B cell (primary cell): ENCODE measurements at regions of chr4 and their contacts with region 1.

Region 1: DNA sequence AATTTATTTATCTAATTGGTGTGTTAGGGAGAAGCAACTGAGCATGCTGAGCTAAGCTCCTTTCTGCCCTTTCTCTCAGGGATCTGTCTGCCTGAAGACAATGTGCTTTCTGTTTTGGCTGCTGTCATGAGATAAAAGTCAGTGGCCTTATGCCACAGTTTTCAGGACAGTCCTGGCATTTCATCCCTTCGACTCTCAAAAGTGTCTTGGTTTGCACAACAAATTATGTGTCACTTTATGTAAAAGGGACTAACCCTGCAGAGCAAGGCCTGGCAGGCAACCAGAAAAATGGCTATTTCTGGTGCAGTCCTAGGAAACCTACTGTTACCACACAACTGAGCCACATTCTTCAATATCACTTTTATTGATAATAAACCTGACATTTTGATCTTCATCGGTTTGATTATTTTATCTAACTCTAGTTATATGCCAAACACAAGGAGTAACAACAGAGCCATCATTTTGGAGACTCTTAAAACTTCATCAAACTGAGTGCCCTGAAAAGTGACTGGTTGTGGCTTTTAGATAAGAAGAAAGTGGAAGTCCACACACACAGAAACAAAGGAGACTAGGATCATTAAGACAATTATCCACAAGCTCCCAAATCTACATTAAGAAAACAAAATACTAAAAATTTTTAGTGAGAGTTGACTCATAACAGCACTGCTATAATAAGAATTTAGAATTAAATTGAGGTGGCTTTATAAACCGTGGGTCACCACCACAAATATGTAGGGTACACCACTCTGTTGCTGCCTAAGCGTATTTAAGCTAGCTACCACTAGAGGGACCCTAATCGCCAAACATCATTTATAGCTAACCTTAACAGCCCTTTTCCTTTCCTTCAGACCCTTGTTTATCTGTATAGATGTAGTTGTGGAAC is 95.9 kb upstream of the PTPN13 start:
- DNase-seq: peak; percentile 44
- ATAC-seq: peak; percentile 67
- H3K4me3 ChIP-seq: no peak overlapping the region
- H3K4me3 Mint-ChIP-seq: no peak overlapping the region
- H3K27ac ChIP-seq: no peak overlapping the region
- H3K27ac Mint-ChIP-seq: no peak overlapping the region
- H3K4me1 ChIP-seq: no peaks in the 10 kb centered on the region
- H3K4me1 Mint-ChIP-seq: no peaks in the 10 kb centered on the region
- H3K27me3 ChIP-seq: no peaks in the 10 kb centered on the region
- H3K27me3 Mint-ChIP-seq: peaks cover 17% of the 10 kb centered on the region
- CTCF ChIP-seq: peak; percentile 86

Region 2: GRCh38 chr4:86487738-86488348 is 10.4 kb before region 1 on chr4:
- CTCF ChIA-PET with region 1: interaction called, 39 read pairs
- POLR2A ChIA-PET with region 1: no interaction called
- intact Hi-C with region 1: no loop called
- DNase-seq: no peak
- ATAC-seq: no peak
- H3K4me3 ChIP-seq: no peak overlapping the region
- H3K4me3 Mint-ChIP-seq: no peak overlapping the region
- H3K27ac ChIP-seq: no peak overlapping the region
- H3K27ac Mint-ChIP-seq: no peak overlapping the region
- H3K4me1 ChIP-seq: no peaks in the 10 kb centered on the region
- H3K4me1 Mint-ChIP-seq: peaks cover 2% of the 10 kb centered on the region
- H3K27me3 ChIP-seq: no peaks in the 10 kb centered on the region
- H3K27me3 Mint-ChIP-seq: no peaks in the 10 kb centered on the region
- CTCF ChIP-seq: no peak

Region 3: GRCh38 chr4:86512631-86513030 is 14.4 kb after region 1 on chr4:
- CTCF ChIA-PET with region 1: interaction called, 26 read pairs
- POLR2A ChIA-PET with region 1: no interaction called
- intact Hi-C with region 1: no loop called
- DNase-seq: no peak
- ATAC-seq: no peak
- H3K4me3 ChIP-seq: no peak overlapping the region
- H3K4me3 Mint-ChIP-seq: no peak overlapping the region
- H3K27ac ChIP-seq: no peak overlapping the region
- H3K27ac Mint-ChIP-seq: no peak overlapping the region
- H3K4me1 ChIP-seq: no peaks in the 10 kb centered on the region
- H3K4me1 Mint-ChIP-seq: no peaks in the 10 kb centered on the region
- H3K27me3 ChIP-seq: no peaks in the 10 kb centered on the region
- H3K27me3 Mint-ChIP-seq: peaks cover 5% of the 10 kb centered on the region
- CTCF ChIP-seq: no peak

Region 4: DNA sequence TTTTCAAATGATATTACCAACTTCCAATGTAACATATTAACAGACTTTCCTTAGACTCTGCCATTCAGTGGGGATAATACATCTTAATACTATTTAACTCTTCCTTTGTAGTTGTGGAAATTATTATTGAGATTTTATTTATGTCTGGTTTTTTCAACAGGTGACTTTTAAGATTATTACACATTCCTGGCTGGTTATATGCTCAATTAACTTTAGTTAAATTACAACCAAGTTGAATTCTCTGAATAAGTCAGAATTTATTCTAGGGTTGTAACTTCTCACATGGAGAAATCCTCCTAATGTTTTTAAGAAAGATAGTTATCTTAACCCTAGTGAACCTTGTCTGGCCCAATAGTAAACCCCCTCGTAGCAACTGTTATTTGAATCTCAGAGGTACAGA is 243.6 kb after region 1 on chr4:
- CTCF ChIA-PET with region 1: no interaction called
- POLR2A ChIA-PET with region 1: no interaction called
- intact Hi-C with region 1: no loop called
- DNase-seq: no peak
- ATAC-seq: no peak
- H3K4me3 ChIP-seq: no peak overlapping the region
- H3K4me3 Mint-ChIP-seq: no peak overlapping the region
- H3K27ac ChIP-seq: no peak overlapping the region
- H3K27ac Mint-ChIP-seq: no peak overlapping the region
- H3K4me1 ChIP-seq: no peaks in the 10 kb centered on the region
- H3K4me1 Mint-ChIP-seq: no peaks in the 10 kb centered on the region
- H3K27me3 ChIP-seq: no peaks in the 10 kb centered on the region
- H3K27me3 Mint-ChIP-seq: no peaks in the 10 kb centered on the region
- CTCF ChIP-seq: no peak

Region 5: DNA sequence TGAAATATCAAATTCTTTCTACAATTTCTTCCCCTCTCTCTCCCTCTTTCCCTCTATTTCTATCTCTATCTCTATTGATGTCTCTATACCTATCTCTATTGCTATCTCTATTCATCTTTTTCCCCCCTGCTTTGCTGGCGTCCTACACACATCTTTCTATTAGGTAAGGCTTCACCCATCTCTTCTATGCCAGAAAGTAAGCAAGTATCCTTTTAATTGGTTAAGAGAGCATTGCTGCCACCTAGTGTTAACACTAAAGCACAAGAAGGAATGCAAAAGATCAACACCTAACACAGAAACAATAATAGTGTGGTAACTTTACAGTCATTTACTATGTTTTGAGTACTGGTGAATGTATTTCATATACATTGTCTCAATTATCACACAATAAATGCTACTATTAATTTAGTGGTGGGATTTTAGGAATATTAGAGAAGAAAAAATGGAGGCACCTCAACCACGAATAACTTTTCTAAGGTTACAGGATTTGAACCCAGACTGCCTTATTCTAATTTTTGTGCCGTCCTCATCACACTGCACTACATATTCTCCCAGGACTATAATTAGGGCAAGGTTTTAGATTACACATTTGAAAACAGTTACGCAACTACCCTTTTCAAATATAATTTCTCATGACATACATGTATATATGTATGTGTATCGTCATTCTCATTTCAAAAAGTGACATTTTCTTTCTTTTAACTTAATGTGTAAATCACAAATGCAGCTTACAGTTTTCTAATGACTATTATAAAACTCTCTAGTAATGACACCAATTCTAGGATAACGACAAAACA is 397.7 kb after region 1 on chr4:
- CTCF ChIA-PET with region 1: interaction called, 23 read pairs
- POLR2A ChIA-PET with region 1: no interaction called
- intact Hi-C with region 1: loop called (anchors 1 kb)
- DNase-seq: peak; percentile 59
- ATAC-seq: peak; percentile 60
- H3K4me3 ChIP-seq: no peak overlapping the region
- H3K4me3 Mint-ChIP-seq: no peak overlapping the region
- H3K27ac ChIP-seq: no peak overlapping the region
- H3K27ac Mint-ChIP-seq: no peak overlapping the region
- H3K4me1 ChIP-seq: peaks cover 10 to 13% of the 10 kb centered on the region in 2 donors
- H3K4me1 Mint-ChIP-seq: peaks cover 9% of the 10 kb centered on the region
- H3K27me3 ChIP-seq: peaks cover 0 to 20% (median 7%) of the 10 kb centered on the region in 4 experiments
- H3K27me3 Mint-ChIP-seq: peaks cover 17% of the 10 kb centered on the region
- CTCF ChIP-seq: peak; percentile 91

Region 6: DNA sequence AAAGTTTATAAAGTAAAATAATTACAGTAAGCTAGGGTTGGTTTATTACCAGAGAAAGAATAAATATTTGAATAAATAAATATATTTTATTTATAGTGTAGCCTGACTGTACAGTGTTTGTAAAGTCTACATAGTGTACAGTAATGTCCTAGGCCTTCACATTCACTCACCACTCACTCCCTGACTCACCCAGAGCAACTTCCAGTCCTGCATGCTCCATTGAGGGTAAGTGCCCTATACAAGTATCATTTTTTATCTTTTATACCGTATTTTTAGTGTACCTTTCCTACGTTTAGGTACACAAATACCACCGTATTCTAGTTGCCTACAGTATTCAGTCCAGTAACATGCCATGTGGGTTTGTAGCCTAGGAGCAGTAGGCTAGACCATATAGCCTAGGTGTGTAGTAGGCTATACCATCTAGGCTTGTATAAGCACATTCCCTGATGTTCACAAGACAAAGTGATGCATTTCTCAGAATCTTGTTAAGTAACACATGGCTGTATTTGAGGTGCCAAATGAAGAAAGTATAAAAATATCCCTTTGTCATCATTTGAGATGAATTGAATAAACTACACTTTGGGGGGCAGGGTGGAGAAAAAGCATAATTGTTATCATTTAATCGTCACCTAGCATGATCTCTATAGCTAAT is 736.9 kb after region 1 on chr4:
- CTCF ChIA-PET with region 1: interaction called, 10 read pairs
- POLR2A ChIA-PET with region 1: no interaction called
- intact Hi-C with region 1: no loop called
- DNase-seq: peak; percentile 12
- ATAC-seq: no peak
- H3K4me3 ChIP-seq: peak overlapping the region in 4 of 5 experiments; percentile 35 to 66 (median 44)
- H3K4me3 Mint-ChIP-seq: peak overlapping the region; percentile 74
- H3K27ac ChIP-seq: no peak overlapping the region
- H3K27ac Mint-ChIP-seq: no peak overlapping the region
- H3K4me1 ChIP-seq: peaks cover 0 to 6% of the 10 kb centered on the region in 2 donors
- H3K4me1 Mint-ChIP-seq: peaks cover 4% of the 10 kb centered on the region
- H3K27me3 ChIP-seq: no peaks in the 10 kb centered on the region
- H3K27me3 Mint-ChIP-seq: peaks cover 5% of the 10 kb centered on the region
- CTCF ChIP-seq: no peak

Region 7: DNA sequence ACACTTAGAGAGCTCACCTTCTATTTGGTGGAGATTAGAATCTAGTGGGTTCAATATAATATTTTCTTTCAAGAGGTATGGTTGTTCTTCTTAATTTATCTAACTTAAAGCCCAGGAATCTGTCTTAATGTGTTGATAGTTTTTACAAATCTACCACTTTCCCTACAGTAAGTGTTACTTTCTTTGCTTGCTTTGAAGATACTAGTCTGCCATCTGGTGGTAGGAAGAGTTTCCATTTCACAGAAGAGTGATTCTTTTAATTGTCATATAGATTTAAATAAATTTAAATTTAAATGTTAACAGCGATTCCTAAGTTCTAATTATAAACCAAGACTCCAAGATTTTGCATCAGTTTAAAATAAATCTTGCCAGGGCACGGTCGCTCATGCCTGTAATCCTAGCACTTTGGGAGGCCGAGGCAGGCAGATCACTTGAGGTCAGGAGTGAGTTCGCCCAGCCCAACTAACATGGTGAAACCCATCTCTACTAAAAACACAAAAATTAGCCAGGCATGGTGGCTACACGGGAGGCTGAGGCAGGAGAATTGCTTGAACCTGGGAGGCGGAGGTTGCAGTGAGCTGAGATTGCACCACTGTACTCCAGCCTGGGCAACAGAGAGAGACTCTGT is 967.6 kb after region 1 on chr4:
- CTCF ChIA-PET with region 1: interaction called, 7 read pairs
- POLR2A ChIA-PET with region 1: no interaction called
- intact Hi-C with region 1: loop called (anchors 5 kb)
- DNase-seq: peak; percentile 59
- ATAC-seq: no peak
- H3K4me3 ChIP-seq: no peak overlapping the region
- H3K4me3 Mint-ChIP-seq: no peak overlapping the region
- H3K27ac ChIP-seq: no peak overlapping the region
- H3K27ac Mint-ChIP-seq: no peak overlapping the region
- H3K4me1 ChIP-seq: no peaks in the 10 kb centered on the region
- H3K4me1 Mint-ChIP-seq: no peaks in the 10 kb centered on the region
- H3K27me3 ChIP-seq: no peaks in the 10 kb centered on the region
- H3K27me3 Mint-ChIP-seq: no peaks in the 10 kb centered on the region
- CTCF ChIP-seq: peak; percentile 92